ENCODE measurements at regions of chr12 and their contacts with region 1.

Region 1: GRCh38 chr12:29519585-29520182 is 22.2 kb upstream of the OVCH1 start:
- DNase-seq: peak; percentile 29
- ATAC-seq: peak; percentile 64
- H3K4me3 ChIP-seq: no peak overlapping the region
- H3K27ac ChIP-seq: no peak overlapping the region
- H3K4me1 ChIP-seq: no peaks in the 10 kb centered on the region
- H3K27me3 ChIP-seq: no peaks in the 10 kb centered on the region
- CTCF ChIP-seq: peak; percentile 47 to 66 (median 49); a peak in 5 of 6 replicates
- POLR2A ChIP-seq: no peak
- RAD21 ChIP-seq: peak; percentile 75

Region 2: DNA sequence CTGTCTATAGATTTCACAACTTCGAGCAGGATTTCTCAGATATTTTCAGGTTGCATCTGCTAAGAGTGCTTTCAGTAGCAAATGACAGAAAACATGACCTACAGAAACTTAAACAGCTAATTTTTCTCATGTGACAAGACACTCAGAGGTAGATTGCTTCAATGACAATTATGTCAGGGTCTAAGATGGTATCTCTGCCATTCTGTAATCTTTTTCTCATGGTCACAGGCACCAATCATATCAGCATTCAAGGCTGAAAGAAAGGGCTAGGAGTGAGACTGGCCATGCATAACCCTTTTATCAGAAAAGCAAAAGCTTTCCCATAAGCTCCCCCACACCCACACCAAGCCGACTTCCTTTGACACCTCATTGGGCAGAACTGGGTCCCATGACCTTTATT is 821.1 kb before region 1 on chr12:
- CTCF ChIA-PET with region 1: no interaction called
- POLR2A ChIA-PET with region 1: no interaction called
- RAD21 ChIA-PET with region 1: no interaction called
- intact Hi-C with region 1: no loop called
- DNase-seq: no peak
- ATAC-seq: no peak
- H3K4me3 ChIP-seq: no peak overlapping the region
- H3K27ac ChIP-seq: no peak overlapping the region
- H3K4me1 ChIP-seq: no peaks in the 10 kb centered on the region
- H3K27me3 ChIP-seq: no peaks in the 10 kb centered on the region
- CTCF ChIP-seq: no peak
- POLR2A ChIP-seq: no peak
- RAD21 ChIP-seq: no peak

Region 3: DNA sequence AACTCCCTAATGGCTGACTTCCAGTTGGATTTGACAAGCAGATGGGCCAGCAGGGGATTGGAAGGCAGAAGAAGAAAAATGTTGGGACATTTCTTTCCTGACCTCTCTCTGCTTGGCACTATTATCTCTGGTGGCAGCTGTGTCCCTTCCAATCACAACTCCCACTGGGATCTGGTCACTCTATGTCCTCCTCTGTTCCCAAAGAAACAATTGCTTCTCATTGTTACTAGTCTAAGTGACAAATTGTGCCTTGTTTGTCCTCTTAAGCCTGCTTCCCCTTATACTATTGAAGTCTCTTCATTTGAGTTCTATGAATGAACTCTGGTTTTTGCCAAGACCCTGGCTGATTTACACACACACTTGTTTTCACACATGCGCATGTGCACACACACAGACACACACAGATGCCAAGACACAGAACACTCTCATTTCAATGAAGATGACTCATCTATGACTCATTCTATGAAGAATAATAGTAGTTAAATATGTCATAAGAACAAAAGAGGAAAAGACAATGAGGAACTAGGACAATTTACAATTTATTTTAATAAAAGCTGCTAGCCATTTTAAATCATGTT is 453.6 kb before region 1 on chr12:
- CTCF ChIA-PET with region 1: no interaction called
- POLR2A ChIA-PET with region 1: no interaction called
- RAD21 ChIA-PET with region 1: no interaction called
- intact Hi-C with region 1: loop called (anchors 10 kb)
- DNase-seq: peak; percentile 40
- ATAC-seq: peak; percentile 47; the same call in 1 of the 2 replicates
- H3K4me3 ChIP-seq: no peak overlapping the region
- H3K27ac ChIP-seq: no peak overlapping the region
- H3K4me1 ChIP-seq: peaks cover 4 to 7% of the 10 kb centered on the region in 2 experiments; a peak in 3 of 4 replicates
- H3K27me3 ChIP-seq: no peaks in the 10 kb centered on the region
- CTCF ChIP-seq: no peak
- POLR2A ChIP-seq: no peak
- RAD21 ChIP-seq: no peak

Region 4: DNA sequence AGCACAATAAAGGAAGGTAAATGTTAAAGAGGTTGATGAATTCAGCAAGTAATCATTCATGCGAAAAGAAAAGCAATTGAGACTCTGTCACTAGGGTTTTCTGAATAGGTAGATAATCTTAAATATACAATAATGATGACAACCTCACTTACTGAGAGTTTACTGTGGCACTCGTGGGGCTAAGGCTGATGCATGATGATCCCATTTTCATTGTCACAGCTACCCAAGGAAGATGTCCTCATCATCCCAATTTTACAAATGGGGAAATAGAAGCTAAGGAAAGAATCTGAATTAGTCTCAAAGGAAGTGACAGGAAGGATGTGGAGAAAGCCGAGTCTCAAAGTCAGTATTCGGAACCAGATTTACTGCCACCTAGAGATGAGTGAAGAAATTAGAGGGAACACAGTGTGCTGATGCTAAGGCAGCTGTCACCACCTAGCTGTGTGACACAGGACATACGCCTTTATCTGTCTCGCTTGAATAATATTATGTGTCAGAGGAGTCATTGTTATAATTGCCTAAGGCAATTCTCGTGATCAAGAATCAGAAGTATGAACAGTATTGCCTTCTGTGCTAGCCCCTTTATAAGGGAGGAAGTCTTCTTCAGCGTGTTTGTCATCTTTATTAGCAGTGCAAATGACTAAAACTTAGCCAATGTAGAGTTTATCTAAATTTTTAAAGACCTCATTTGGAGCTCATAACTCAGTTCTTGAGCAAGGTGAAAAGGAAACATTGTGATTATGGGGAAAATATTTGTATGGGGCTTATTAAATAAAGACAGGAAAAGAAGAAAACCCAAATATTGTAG is 201.9 kb before region 1 on chr12:
- CTCF ChIA-PET with region 1: interaction called, 10 read pairs
- POLR2A ChIA-PET with region 1: no interaction called
- RAD21 ChIA-PET with region 1: interaction called in 1 of 2 experiments, 3 read pairs
- intact Hi-C with region 1: no loop called
- DNase-seq: peak; percentile 54
- ATAC-seq: peak; percentile 100
- H3K4me3 ChIP-seq: no peak overlapping the region
- H3K27ac ChIP-seq: no peak overlapping the region
- H3K4me1 ChIP-seq: peaks cover 0 to 15% of the 10 kb centered on the region in 2 experiments; a peak in 2 of 4 replicates
- H3K27me3 ChIP-seq: no peaks in the 10 kb centered on the region
- CTCF ChIP-seq: peak; percentile 80 to 99 (median 92)
- POLR2A ChIP-seq: no peak
- RAD21 ChIP-seq: peak; percentile 94

Region 5: DNA sequence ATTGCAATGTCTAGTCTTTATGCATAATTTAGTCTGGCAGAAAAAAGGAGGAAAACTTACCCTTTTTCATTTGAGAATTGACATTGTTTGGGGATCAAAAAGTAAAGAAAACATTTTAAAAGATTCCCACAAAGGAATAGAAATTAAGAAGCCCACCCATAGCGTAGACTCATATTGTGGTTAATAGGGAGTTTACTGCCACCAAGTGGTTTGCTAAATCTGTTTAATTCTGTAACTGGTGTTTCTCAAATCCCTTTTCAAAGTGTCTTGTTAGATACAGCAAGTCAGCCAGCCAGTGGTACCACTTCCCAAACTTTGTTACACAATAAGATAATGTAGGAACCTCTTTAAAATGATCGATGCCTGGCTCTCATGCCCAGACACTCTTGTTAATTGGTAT is 995.7 kb after region 1 on chr12:
- CTCF ChIA-PET with region 1: no interaction called
- POLR2A ChIA-PET with region 1: no interaction called
- RAD21 ChIA-PET with region 1: no interaction called
- intact Hi-C with region 1: loop called (anchors 2 kb)
- DNase-seq: peak; percentile 2
- ATAC-seq: no peak
- H3K4me3 ChIP-seq: no peak overlapping the region
- H3K27ac ChIP-seq: no peak overlapping the region
- H3K4me1 ChIP-seq: no peaks in the 10 kb centered on the region
- H3K27me3 ChIP-seq: no peaks in the 10 kb centered on the region
- CTCF ChIP-seq: peak in 2 of 3 experiments; percentile 24 to 41; a peak in 2 of 6 replicates
- POLR2A ChIP-seq: no peak
- RAD21 ChIP-seq: peak; percentile 47

Region 6: DNA sequence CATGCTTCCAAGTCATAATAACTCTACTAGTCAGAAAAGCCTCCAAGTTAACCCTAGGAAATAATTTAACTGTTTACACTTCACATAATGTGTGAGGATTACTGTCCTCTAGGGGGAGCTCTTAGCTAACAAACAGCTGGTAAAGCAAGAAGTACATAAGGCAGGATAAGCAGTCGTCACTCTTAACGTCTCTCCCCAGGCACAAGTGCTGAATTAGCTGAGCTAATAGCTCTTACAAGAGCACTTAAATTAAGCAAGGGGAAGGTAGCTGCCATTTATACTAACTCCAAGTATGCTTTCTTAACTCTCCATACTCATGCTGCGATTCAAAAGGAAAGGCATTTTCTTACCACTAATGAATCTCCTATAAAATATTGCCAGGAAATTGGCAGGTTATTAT is 1327.6 kb after region 1 on chr12:
- CTCF ChIA-PET with region 1: no interaction called
- POLR2A ChIA-PET with region 1: no interaction called
- RAD21 ChIA-PET with region 1: no interaction called
- intact Hi-C with region 1: loop called (anchors 1 kb)
- DNase-seq: peak; percentile 62
- ATAC-seq: peak; percentile 48; the same call in 1 of the 2 replicates
- H3K4me3 ChIP-seq: no peak overlapping the region
- H3K27ac ChIP-seq: no peak overlapping the region
- H3K4me1 ChIP-seq: peaks cover 6 to 8% of the 10 kb centered on the region in 2 experiments; a peak in 2 of 4 replicates
- H3K27me3 ChIP-seq: no peaks in the 10 kb centered on the region
- CTCF ChIP-seq: peak; percentile 69 to 88 (median 78)
- POLR2A ChIP-seq: no peak
- RAD21 ChIP-seq: peak; percentile 91

Measured in HCT116 (cell line).